Mammary epithelial cell (primary cell): ENCODE measurements at regions of chr22 and their contacts with region 1.

Region 1: GRCh38 chr22:20279662-20280134 is 11.6 kb upstream of the RTN4R start:
- DNase-seq: no peak
- H3K4me3 ChIP-seq: no peak overlapping the region
- H3K27ac ChIP-seq: no peak overlapping the region
- H3K4me1 ChIP-seq: no peaks in the 10 kb centered on the region
- H3K27me3 ChIP-seq: no peaks in the 10 kb centered on the region
- CTCF ChIP-seq: no peak

Region 2: DNA sequence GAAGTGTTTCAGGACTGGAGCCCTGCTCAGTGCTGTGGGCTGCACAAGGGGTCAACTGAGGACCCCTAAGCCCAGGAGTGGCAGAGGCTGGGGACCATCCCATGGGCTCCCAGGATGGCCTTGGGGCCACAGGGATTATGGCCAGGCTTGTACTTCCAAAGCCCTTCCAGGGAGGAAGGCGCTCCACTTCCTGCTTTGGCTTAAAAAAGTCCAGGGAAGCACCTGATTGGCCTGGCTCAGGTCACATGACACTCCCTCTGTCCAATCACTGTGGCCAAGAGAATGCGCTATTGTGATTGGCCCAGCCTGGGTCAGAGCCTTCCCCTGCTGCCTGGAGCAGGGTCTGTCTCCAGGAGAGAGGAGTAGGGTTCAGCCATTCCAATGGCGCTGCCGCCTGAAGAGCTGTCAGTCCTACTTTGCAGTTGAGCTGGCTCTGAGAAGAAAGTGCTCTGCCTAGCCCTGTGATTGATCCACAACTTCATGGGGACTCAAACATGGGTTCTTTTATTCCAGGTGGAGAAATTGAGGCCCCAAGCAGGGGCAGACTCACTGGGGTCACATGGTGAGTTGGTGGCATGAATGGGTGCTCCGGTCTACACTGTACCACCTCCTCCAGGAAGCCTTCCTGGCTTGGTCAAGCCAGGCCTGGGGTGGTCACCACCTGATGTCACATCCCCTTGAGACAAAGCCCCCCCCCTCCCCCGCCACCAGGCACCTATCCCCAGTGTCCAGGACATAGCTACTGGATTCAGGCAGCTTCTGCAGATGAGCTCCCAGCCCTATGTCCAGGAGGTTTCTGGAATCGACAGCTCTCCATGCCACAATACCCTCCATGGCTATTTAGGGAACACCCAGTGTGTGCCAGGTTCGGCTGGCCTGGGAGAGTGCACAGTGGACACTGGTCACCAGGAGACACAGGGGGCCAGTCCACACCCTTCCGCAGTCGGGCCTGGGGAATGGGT is 59.8 kb before region 1 on chr22:
- CTCF ChIA-PET with region 1: no interaction called
- dilution Hi-C with region 1: loop called (anchors 5 kb)
- in situ Hi-C with region 1: no loop called
- intact Hi-C with region 1: no loop called
- DNase-seq: no peak
- H3K4me3 ChIP-seq: no peak overlapping the region
- H3K27ac ChIP-seq: no peak overlapping the region
- H3K4me1 ChIP-seq: no peaks in the 10 kb centered on the region
- H3K27me3 ChIP-seq: no peaks in the 10 kb centered on the region
- CTCF ChIP-seq: no peak

Region 3: DNA sequence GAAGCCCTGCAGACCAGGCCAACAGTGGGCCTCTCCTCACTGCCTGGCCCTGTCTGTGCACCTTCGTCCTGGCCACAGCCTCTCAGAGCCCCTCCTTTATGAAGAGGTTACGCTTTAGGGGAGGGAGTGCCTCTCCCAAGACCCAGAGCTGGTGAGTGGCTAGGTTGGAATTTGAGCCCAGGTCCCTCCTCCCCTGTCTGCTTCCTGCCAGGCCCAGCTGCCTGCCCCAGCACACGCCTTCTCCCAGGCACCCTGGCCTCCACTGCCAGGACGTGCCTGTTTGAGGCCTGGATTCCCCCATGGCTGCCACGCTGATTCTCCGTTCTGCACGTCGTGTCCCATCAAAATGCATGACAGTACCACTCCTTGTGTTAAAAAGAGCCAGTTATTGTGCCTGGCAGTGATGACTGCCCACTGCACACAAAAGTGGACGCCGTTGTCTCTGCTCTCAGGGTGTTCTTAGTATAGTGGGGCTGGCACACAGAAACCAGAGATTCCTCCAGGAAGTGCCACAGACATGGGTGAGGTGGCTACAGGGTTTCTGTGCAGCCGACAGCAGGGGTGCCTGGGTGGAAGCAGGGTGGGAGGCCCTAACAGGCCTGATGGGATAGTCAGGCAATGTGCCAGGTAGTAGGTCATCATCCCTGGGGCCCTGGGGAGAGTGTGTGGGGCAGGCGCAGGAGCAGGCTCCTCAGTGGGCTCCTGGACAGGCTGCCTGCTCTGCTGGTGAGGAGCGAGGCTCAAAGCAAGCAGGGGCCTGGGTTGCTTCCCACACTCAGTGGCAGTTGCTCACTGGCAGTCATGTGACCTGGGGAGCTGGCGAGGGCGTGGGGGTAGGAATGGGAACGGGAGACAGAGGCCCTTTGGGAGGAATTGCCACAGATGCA is 251.9 kb after region 1 on chr22:
- CTCF ChIA-PET with region 1: no interaction called
- dilution Hi-C with region 1: no loop called
- in situ Hi-C with region 1: no loop called
- intact Hi-C with region 1: no loop called
- DNase-seq: peak; percentile 95
- H3K4me3 ChIP-seq: no peak overlapping the region
- H3K27ac ChIP-seq: peak overlapping the region; percentile 98
- H3K4me1 ChIP-seq: peaks cover 58% of the 10 kb centered on the region
- H3K27me3 ChIP-seq: no peaks in the 10 kb centered on the region
- CTCF ChIP-seq: no peak

Region 4: DNA sequence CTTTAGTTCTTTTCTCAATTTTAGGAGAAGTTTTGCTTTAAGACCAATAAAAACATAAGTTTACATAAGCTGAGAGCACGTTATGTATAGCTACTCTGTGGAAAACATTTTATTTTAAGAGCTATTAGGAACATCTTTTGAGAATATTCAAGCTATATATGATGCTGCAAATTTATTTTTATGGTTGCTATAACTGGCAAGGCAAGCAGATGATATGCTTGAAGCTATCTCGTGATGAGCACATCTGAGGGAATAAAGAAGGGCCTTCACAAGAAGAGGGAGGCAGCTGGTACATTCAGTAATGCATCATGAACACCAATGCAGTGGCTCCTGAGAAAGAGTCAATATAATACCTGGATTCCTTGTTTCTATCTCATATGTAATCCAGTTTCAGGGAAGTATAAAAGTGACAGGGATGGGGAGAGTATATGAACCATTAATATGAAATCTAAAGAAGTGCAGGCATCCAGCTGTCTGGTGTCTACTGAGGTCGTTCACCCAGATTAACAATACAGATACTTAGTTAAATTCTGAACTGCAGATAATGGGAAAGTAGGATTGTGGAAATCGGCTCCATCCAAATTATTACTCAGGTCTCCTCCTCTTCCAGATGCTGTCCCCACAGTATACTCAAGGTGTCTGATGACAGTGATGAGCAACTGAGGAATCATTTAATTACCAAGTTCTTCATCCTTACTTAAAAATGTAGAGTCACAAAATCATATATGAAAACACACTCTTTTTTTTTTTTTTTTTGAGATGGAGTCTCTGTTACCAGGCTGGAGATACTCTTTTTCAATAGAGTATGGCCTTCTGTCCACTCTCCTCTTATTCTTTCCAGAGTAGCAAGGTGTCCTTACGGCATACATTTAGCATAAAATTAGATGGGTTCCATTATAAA is 393.8 kb after region 1 on chr22:
- CTCF ChIA-PET with region 1: no interaction called
- dilution Hi-C with region 1: no loop called
- in situ Hi-C with region 1: no loop called
- intact Hi-C with region 1: no loop called
- DNase-seq: no peak
- H3K4me3 ChIP-seq: no peak overlapping the region
- H3K27ac ChIP-seq: no peak overlapping the region
- H3K4me1 ChIP-seq: no peaks in the 10 kb centered on the region
- H3K27me3 ChIP-seq: peaks cover 2% of the 10 kb centered on the region
- CTCF ChIP-seq: no peak